ENCODE measurements at regions of chr3 and their contacts with region 1.

Region 1: GRCh38 chr3:105402287-105402801 is 35.6 kb downstream of the ALCAM start:
- DNase-seq: peak; percentile 87
- H3K4me3 Mint-ChIP-seq: peak overlapping the region; percentile 52
- H3K27ac Mint-ChIP-seq: peak overlapping the region; percentile 93
- H3K4me1 Mint-ChIP-seq: peaks cover 53% of the 10 kb centered on the region
- H3K27me3 Mint-ChIP-seq: no peaks in the 10 kb centered on the region
- CTCF ChIP-seq: no peak

Region 2: DNA sequence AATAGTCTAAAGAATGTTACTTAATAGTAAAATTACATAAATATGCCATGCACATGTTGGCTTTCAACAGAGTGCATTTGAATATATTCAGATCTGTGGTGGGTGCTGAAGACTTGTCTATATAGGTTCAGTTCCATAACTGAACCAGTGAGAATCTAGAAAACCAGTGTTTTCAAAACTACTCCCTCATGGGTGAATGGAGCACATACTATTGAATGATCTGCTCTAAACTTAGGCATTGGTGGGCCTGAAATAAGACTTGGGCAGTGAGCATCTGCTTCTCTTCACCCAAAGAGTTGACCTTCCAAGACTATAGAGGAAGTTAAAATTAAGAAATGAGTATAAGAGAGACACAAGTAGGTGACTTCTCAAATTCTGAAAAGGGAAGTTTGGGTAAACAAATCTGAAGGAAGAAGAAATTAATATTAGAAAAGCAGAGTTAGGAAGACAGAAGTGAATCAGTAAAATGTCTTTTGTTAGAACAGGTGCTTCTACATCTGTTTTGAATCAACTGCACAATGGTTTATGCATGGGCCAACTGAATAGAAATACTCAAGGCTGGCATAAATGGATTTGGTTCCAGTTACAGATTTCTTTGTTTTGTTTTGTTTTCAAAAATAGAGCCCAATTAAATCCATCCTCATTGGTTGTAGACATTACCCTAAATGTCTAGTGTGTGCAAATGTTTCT is 16.4 kb before region 1 on chr3:
- CTCF ChIA-PET with region 1: interaction called, 14 read pairs
- intact Hi-C with region 1: loop called (anchors 2 kb)
- DNase-seq: no peak
- H3K4me3 Mint-ChIP-seq: no peak overlapping the region
- H3K27ac Mint-ChIP-seq: peak overlapping the region; percentile 93
- H3K4me1 Mint-ChIP-seq: peaks cover 54% of the 10 kb centered on the region
- H3K27me3 Mint-ChIP-seq: no peaks in the 10 kb centered on the region
- CTCF ChIP-seq: no peak